Activated CD4-positive, alpha-beta T cell treated with anti-CD3 and anti-CD28 coated beads for 36 hours (primary cell): ENCODE measurements at regions of chr12 and their contacts with region 1.

Region 1: DNA sequence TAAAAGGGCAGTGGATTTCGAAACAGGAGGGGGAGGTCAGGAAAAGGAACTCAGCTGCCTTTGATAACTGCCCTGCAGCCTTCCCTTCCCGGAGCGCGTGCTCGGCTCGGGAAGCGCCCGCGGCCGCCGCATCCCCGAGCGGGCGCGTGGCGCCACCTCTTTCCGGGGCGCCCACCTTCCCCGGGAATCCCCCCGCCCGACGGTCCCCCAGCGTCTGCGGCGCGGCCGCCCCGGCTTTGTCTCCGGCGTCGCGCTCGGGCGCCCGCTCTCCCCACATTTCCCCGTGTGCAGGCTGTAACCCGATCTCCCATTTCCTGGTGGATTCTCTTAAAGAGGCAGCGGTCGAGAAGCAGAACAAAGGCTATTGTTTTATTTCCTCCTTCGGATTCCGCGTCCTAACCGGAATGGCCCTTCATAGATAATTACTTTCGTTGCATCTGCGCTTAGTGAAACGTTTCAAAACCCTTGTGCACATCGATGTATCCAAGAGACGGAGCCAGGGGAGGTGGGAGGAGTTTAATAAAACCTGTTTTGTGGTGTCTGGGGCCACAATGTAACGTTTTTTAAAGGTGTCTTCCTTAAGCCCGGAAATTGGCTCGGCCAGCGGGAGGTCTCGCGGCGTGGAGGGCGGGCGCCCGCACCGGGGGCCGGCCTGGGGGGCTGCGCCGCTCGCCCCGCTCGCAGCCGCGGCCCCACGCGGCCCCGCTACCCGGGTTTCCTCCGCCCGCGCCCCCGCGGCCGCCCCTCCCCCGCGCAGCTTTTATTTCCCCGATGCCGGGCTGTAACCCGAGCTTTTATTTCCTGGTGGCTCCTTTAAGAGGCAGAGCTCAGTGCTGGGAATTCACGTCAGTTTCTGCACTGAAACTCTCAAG is at the start of gene ETV6:
- DNase-seq: peak; percentile 89
- ATAC-seq: peak; percentile 52
- H3K4me3 Mint-ChIP-seq: peak within 1 kb of the TSS; percentile 93
- H3K27ac Mint-ChIP-seq: peak within 1 kb of the TSS; percentile 100
- H3K4me1 Mint-ChIP-seq: peaks cover 27% of the 10 kb centered on the region
- H3K27me3 Mint-ChIP-seq: no peaks in the 10 kb centered on the region
- total RNA-seq, gene ETV6: 53.5 to 56.7 TPM

Region 2: GRCh38 chr12:10721651-10722501 is 927.2 kb before region 1 on chr12:
- CTCF ChIA-PET with region 1: no interaction called
- POLR2A ChIA-PET with region 1: no interaction called
- intact Hi-C with region 1: loop called in 1 of 2 experiments (anchors 5 kb)
- DNase-seq: peak; percentile 74
- ATAC-seq: peak; percentile 68
- H3K4me3 Mint-ChIP-seq: peak overlapping the region; percentile 91
- H3K27ac Mint-ChIP-seq: peak overlapping the region; percentile 91
- H3K4me1 Mint-ChIP-seq: peaks cover 25% of the 10 kb centered on the region
- H3K27me3 Mint-ChIP-seq: peaks cover 29% of the 10 kb centered on the region

Region 3: DNA sequence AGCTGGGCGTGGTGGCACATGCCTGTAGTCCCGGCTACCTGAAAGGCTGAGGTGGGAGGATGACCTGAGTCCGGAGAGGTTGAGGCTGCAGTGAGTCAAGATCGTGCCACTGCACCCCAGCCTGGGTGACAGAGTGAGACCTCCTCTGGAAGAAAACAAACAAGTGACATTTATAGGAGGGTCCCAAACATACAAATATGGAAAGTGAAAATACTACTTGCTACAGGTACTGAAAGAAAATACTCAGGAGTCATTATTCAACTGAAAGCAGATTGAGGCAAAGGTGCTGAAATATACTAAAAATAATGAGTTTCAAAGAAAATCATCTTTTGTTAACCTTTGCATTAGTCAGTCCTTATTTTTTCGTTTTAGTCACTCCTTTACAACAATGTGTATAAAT is 53.9 kb after region 1 on chr12:
- CTCF ChIA-PET with region 1: no interaction called
- POLR2A ChIA-PET with region 1: interaction called, 3 read pairs
- intact Hi-C with region 1: loop called (anchors 2 kb)
- DNase-seq: peak; percentile 50
- ATAC-seq: peak; percentile 88
- H3K4me3 Mint-ChIP-seq: peak overlapping the region; percentile 6
- H3K27ac Mint-ChIP-seq: peak overlapping the region; percentile 81
- H3K4me1 Mint-ChIP-seq: peaks cover 59% of the 10 kb centered on the region
- H3K27me3 Mint-ChIP-seq: no peaks in the 10 kb centered on the region

Region 4: GRCh38 chr12:11771356-11771755 is 122.3 kb after region 1 on chr12:
- CTCF ChIA-PET with region 1: interaction called, 4 read pairs
- POLR2A ChIA-PET with region 1: interaction called, 13 read pairs
- intact Hi-C with region 1: loop called in 1 of 2 experiments (anchors 2 kb)
- DNase-seq: peak; percentile 48
- ATAC-seq: peak; percentile 45
- H3K4me3 Mint-ChIP-seq: no peak overlapping the region
- H3K27ac Mint-ChIP-seq: peak overlapping the region; percentile 79
- H3K4me1 Mint-ChIP-seq: peaks cover 94% of the 10 kb centered on the region
- H3K27me3 Mint-ChIP-seq: no peaks in the 10 kb centered on the region

Region 5: GRCh38 chr12:11901701-11902524 is 252.8 kb after region 1 on chr12:
- CTCF ChIA-PET with region 1: no interaction called
- POLR2A ChIA-PET with region 1: interaction called, 3 read pairs
- intact Hi-C with region 1: loop called in 1 of 2 experiments (anchors 1 kb)
- DNase-seq: peak; percentile 75
- ATAC-seq: peak; percentile 78
- H3K4me3 Mint-ChIP-seq: peak overlapping the region; percentile 39
- H3K27ac Mint-ChIP-seq: peak overlapping the region; percentile 88
- H3K4me1 Mint-ChIP-seq: peaks cover 44% of the 10 kb centered on the region
- H3K27me3 Mint-ChIP-seq: peaks cover 2% of the 10 kb centered on the region

Region 6: DNA sequence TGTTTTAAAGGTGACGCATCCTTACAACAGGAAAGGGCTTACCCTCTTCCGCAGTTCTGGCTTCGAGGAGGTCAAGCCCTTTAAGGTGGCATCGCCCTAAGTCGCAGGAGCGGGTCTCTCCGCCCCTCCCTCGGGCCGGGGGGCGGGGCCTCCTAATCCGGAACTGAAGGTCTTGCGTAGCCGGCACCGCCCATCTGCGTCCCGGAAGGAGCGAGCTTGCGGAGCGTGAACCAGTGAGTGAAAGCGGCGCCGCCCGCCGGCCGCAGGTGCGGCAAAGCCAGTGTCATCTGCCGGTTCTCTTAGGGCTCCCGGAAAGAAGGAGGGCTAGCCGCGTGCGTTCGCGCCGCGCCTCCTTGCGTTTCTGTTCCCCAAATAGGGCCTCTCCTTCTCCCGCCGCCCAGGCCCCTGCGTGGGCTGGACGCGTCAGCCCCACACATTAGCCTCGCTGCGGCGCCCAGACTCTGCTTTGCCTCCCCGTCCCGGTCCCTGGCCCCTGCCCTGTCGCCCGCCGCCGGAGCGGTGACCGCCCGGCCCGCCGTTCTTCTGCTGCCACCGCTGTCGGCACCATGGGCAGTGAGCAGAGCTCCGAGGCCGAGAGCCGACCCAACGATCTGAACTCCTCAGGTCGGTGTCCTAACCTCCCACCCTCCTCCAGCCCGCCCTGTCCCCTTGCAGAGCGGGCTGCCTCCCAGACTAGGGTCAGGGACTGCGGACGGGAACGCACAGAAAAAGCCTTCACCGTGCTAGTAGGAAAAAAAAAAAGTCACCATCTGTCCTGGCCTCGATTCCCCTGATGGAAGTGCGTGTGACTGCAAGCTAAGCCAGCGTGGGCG is 708.0 kb after region 1 on chr12 and contains the start of gene BORCS5:
- CTCF ChIA-PET with region 1: no interaction called
- POLR2A ChIA-PET with region 1: interaction called, 4 read pairs
- intact Hi-C with region 1: loop called in 1 of 2 experiments (anchors 1 kb)
- DNase-seq: peak; percentile 99
- ATAC-seq: peak; percentile 94
- H3K4me3 Mint-ChIP-seq: peak within 1 kb of the TSS; percentile 98
- H3K27ac Mint-ChIP-seq: peak within 1 kb of the TSS; percentile 99
- H3K4me1 Mint-ChIP-seq: peaks cover 38% of the 10 kb centered on the region
- H3K27me3 Mint-ChIP-seq: no peaks in the 10 kb centered on the region
- total RNA-seq, gene BORCS5: 41.8 to 45.0 TPM